IMR-90 (cell line): ENCODE measurements at regions of chr15 and their contacts with region 1.

Region 1: DNA sequence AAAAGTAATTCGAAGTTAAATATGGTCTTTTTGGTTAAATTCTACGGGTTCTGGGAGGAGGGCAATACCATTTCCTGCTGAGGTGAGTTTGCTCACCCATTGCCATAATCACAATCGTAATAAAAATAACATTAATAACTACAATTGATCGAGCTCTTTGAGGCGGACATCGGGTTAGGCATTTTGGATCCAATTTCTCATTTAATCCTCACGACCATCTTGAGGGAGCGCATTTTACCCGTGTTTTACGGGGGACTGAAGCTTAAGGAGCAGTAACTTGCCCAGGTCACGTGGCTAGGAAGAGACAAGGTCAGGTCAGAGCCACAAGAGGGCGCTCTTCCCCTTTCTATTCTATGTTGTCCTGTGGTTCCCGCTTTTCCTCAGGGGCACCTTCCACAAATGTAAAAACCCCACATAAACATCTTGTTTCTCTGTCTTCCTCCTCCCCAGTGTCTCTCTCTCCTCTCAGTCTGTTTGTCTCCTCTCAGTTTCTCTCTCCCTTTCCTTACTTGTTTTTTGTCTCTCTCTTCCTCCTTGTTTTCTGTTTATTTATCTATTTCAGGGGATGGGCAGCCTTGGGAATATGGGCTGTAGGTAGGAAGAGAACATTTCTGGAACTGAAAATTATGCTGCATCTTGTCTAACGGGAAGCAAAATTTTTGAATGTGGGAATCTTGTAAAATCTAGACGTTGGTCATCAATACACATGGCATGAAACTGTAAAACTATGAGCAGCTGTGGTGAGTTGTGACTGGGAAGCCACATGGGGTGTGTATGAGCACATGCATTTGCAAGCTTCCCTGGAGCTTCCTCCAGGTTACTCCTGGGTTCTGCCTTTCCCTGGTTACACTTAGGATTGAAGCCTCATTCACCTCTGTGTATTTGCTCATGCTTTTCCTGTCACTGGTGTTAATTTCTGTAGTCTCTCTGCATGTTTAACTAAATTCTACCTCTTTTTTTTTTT is 71.0 kb downstream of the SQOR start:
- DNase-seq: peak; percentile 86
- ATAC-seq: peak; percentile 83
- H3K4me3 ChIP-seq: peak overlapping the region; percentile 43
- H3K27ac ChIP-seq: no peak overlapping the region
- H3K4me1 ChIP-seq: no peaks in the 10 kb centered on the region
- H3K27me3 ChIP-seq: 0 out of 2 replicates have a peak, but pooled peaks cover 2% of the 10 kb centered on the region
- CTCF ChIP-seq: peak; percentile 87
- POLR2A ChIP-seq: no peak
- RAD21 ChIP-seq: peak; percentile 79

Region 2: DNA sequence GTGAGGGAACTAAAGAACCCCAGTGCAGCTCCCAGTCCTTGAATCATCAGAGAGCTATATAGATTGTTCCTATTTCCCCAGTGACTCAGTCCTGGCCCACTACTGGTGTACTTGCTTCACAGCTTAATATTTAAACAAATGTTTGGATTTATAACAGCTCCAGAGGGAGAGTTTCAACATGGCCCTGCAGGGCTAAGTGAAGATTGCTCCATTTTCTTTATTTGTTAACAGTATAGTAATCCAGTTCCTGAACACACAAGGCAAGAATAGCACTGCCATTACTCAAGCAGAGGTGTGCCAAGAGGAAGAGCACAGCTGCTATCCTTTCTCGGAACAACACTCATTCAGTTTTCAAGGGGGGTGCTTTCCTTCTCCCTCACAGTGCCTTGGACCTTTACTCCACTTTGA is 64.4 kb before region 1 on chr15:
- CTCF ChIA-PET with region 1: interaction called, 5 read pairs
- POLR2A ChIA-PET with region 1: no interaction called
- dilution Hi-C with region 1: no loop called
- in situ Hi-C with region 1: no loop called
- intact Hi-C with region 1: loop called (anchors 2 kb)
- DNase-seq: peak; percentile 96
- ATAC-seq: peak; percentile 60
- H3K4me3 ChIP-seq: no peak overlapping the region
- H3K27ac ChIP-seq: peak overlapping the region; percentile 88; the same call in 1 of the 2 replicates
- H3K4me1 ChIP-seq: peaks cover 28% of the 10 kb centered on the region
- H3K27me3 ChIP-seq: no peaks in the 10 kb centered on the region
- CTCF ChIP-seq: 0 out of 2 replicates have a peak, but pooled peaks have one; percentile 9
- POLR2A ChIP-seq: no peak
- RAD21 ChIP-seq: no peak

Region 3: GRCh38 chr15:45674677-45675076 is 31.1 kb before region 1 on chr15:
- CTCF ChIA-PET with region 1: no interaction called
- POLR2A ChIA-PET with region 1: no interaction called
- dilution Hi-C with region 1: no loop called
- in situ Hi-C with region 1: no loop called
- intact Hi-C with region 1: no loop called
- DNase-seq: no peak
- ATAC-seq: no peak
- H3K4me3 ChIP-seq: no peak overlapping the region
- H3K27ac ChIP-seq: no peak overlapping the region
- H3K4me1 ChIP-seq: peaks cover 4% of the 10 kb centered on the region
- H3K27me3 ChIP-seq: no peaks in the 10 kb centered on the region
- CTCF ChIP-seq: no peak
- POLR2A ChIP-seq: no peak
- RAD21 ChIP-seq: no peak

Region 4: DNA sequence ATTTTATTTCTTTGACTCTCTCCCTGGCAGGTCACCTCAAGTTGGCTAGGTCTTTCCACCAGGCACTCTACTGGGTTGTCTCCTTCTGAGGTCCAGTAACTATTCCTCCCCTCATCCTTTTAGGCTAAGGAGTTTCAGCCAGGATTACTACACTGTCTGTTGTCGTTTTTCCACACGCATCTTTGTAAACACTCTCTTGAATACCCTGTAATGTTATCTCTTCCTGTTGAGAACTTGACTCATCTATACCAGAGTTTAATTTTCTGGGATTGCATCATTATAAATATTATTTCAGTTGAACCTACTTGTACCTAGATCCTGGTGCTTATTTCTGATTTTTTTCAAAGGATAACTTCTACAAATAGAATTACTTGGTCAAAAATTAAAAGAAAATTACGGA is 67.4 kb after region 1 on chr15:
- CTCF ChIA-PET with region 1: no interaction called
- POLR2A ChIA-PET with region 1: no interaction called
- dilution Hi-C with region 1: no loop called
- in situ Hi-C with region 1: no loop called
- intact Hi-C with region 1: no loop called
- DNase-seq: peak; percentile 16
- ATAC-seq: no peak
- H3K4me3 ChIP-seq: no peak overlapping the region
- H3K27ac ChIP-seq: no peak overlapping the region
- H3K4me1 ChIP-seq: no peaks in the 10 kb centered on the region
- H3K27me3 ChIP-seq: no peaks in the 10 kb centered on the region
- CTCF ChIP-seq: no peak
- POLR2A ChIP-seq: no peak
- RAD21 ChIP-seq: no peak

Region 5: GRCh38 chr15:46442184-46442583 is 736.4 kb after region 1 on chr15:
- CTCF ChIA-PET with region 1: no interaction called
- POLR2A ChIA-PET with region 1: no interaction called
- dilution Hi-C with region 1: no loop called
- in situ Hi-C with region 1: no loop called
- intact Hi-C with region 1: loop called (anchors 10 kb)
- DNase-seq: no peak
- ATAC-seq: no peak
- H3K4me3 ChIP-seq: no peak overlapping the region
- H3K27ac ChIP-seq: no peak overlapping the region
- H3K4me1 ChIP-seq: no peaks in the 10 kb centered on the region
- H3K27me3 ChIP-seq: no peaks in the 10 kb centered on the region
- CTCF ChIP-seq: no peak
- POLR2A ChIP-seq: no peak
- RAD21 ChIP-seq: no peak

Region 6: GRCh38 chr15:47184003-47184907 is 1478.5 kb after region 1 on chr15:
- CTCF ChIA-PET with region 1: no interaction called
- POLR2A ChIA-PET with region 1: no interaction called
- dilution Hi-C with region 1: no loop called
- in situ Hi-C with region 1: no loop called
- intact Hi-C with region 1: loop called (anchors 5 kb)
- DNase-seq: peak; percentile 14
- ATAC-seq: peak; percentile 82
- H3K4me3 ChIP-seq: peak overlapping the region; percentile 40
- H3K27ac ChIP-seq: no peak overlapping the region
- H3K4me1 ChIP-seq: peaks cover 3% of the 10 kb centered on the region; the same call in 1 of the 2 replicates
- H3K27me3 ChIP-seq: peaks cover 39% of the 10 kb centered on the region
- CTCF ChIP-seq: no peak
- POLR2A ChIP-seq: no peak
- RAD21 ChIP-seq: no peak